ENCODE measurements at regions of chr1 and their contacts with region 1.

Region 1: DNA sequence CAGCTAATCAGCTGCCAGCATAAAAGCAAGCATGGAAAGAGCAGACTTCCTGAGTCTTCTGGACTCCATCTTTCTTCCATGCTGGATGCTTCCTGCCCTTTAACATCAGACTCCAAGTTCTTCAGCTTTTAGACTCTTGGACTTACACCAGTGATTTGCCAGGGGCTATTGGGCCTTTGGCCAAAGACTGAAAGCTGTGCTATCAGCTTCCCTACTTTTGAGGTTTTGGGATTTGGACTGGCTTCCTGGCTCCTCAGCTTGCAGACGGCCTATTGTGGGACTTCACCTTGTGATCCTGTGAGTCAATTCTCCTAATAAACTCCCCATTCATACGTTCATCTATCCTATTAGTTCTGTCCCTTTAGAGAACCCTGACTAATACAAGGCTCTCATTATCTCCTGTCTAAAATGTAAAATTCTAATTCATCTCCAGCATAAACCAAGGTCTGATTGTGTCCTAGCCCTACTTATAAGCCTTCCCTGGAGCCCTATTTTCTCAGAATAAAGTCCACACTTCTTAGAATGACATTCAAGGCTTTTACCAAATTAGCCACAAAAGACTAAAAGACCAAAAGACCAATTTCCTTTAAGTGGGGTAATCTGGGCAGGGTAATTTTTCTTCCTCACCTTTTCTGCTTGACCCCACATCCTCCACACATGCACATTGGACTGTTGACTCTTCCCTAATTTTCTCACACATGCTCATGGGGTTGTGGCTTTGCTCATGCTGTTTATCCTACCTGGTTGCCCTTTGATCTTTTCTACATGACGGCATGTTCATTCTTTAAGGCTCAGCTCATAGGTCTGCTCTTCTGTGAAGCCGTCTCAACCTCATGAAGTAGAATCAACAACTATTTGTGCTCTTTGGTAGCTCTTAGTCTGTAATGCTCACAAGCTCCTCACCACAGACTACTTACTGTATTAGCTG is 18.1 kb upstream of the ENAH start:
- DNase-seq: no peak
- ATAC-seq: no peak
- H3K4me3 ChIP-seq: no peak overlapping the region
- H3K4me3 Mint-ChIP-seq: no peak overlapping the region
- H3K27ac ChIP-seq: no peak overlapping the region
- H3K27ac Mint-ChIP-seq: no peak overlapping the region
- H3K4me1 ChIP-seq: no peaks in the 10 kb centered on the region
- H3K4me1 Mint-ChIP-seq: no peaks in the 10 kb centered on the region
- H3K27me3 ChIP-seq: no peaks in the 10 kb centered on the region
- H3K27me3 Mint-ChIP-seq: peaks cover 16% of the 10 kb centered on the region
- CTCF ChIP-seq: no peak

Region 2: GRCh38 chr1:226838456-226838855 is 1167.4 kb after region 1 on chr1:
- CTCF ChIA-PET with region 1: no interaction called
- POLR2A ChIA-PET with region 1: no interaction called
- intact Hi-C with region 1: loop called in 1 of 2 experiments (anchors 5 kb)
- DNase-seq: no peak
- ATAC-seq: no peak
- H3K4me3 ChIP-seq: no peak overlapping the region
- H3K4me3 Mint-ChIP-seq: no peak overlapping the region
- H3K27ac ChIP-seq: no peak overlapping the region
- H3K27ac Mint-ChIP-seq: no peak overlapping the region
- H3K4me1 ChIP-seq: no peaks in the 10 kb centered on the region
- H3K4me1 Mint-ChIP-seq: no peaks in the 10 kb centered on the region
- H3K27me3 ChIP-seq: no peaks in the 10 kb centered on the region
- H3K27me3 Mint-ChIP-seq: no peaks in the 10 kb centered on the region
- CTCF ChIP-seq: no peak